Body of pancreas (tissue), 4 donors: ENCODE measurements at regions of chr12 and their contacts with region 1.

Region 1: GRCh38 chr12:49644620-49644994 is 21.2 kb downstream of the PRPF40B start:
- DNase-seq: peak; percentile 71 to 82 (median 76)
- ATAC-seq: peak; percentile 70
- H3K4me3 ChIP-seq: no peak overlapping the region
- H3K27ac ChIP-seq: no peak overlapping the region
- H3K4me1 ChIP-seq: no peaks in the 10 kb centered on the region
- H3K27me3 ChIP-seq: no peaks in the 10 kb centered on the region
- CTCF ChIP-seq: peak; percentile 70 to 94 (median 87)
- POLR2A ChIP-seq: no peak

Region 2: GRCh38 chr12:49707128-49707811 is 62.7 kb after region 1 on chr12 and contains the start of gene FMNL3:
- intact Hi-C with region 1: loop called (anchors 5 kb)
- DNase-seq: peak; percentile 97 to 99 (median 98)
- ATAC-seq: peak; percentile 99
- H3K4me3 ChIP-seq: peak within 1 kb of the TSS; percentile 39 to 49
- H3K27ac ChIP-seq: peak within 1 kb of the TSS in 3 of 4 donors; percentile 51 to 75 (median 67)
- H3K4me1 ChIP-seq: peaks cover 4% of the 10 kb centered on the region
- H3K27me3 ChIP-seq: no peaks in the 10 kb centered on the region
- CTCF ChIP-seq: peak; percentile 93 to 99 (median 96)
- POLR2A ChIP-seq: no peak
- total RNA-seq, gene FMNL3: 3.0 to 6.2 TPM